CD4-positive, alpha-beta memory T cell (primary cell): ENCODE measurements at regions of chr17 and their contacts with region 1.

Region 1: DNA sequence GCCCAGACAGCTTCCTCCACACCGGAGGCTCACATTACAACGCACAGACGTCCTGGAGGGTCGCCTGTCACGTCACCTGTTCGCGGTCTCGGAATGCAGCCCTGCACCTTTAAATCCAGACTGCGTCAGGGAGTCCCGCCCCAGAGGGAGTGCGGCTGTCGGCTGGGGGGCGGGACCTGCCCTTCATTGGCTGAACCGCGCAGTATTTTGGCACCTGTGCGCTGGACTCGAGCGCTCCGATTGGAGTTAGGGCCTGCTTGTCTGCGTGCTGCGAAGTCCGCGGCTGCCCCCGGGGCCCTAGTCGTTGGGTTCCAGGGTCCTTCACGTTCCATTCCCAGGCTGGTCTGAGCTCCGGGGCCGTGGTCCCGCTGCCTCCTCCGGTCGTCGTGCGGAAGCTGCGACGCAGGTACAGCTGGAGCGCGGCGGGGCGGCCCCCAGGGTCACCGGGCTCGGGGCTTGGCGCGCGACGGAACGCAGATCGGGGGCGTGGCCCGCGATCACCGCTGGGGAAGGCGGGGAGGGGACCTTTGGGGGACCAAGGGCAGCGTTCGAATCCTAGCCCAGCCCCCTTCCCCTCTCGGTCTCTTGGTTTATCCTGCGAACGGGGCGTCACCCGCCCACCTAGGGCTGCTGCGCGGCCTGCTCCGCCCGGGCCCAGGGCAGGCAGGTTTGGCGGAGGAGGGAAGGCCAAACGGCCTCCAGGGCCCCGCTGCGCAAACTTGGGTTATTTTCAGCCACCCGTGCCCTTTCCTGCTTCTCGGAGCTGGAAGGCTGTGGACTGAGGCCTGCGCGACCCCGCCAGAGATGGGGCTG is at the start of gene MIEF2:
- DNase-seq: peak; percentile 90 to 94 (median 92)
- H3K4me3 ChIP-seq: peak within 1 kb of the TSS; percentile 66 to 91
- H3K4me3 Mint-ChIP-seq: peak within 1 kb of the TSS; percentile 80 to 90 (median 82)
- H3K27ac ChIP-seq: peak within 1 kb of the TSS; percentile 96
- H3K27ac Mint-ChIP-seq: peak within 1 kb of the TSS; percentile 86 to 94 (median 89)
- H3K4me1 ChIP-seq: peaks cover 53% of the 10 kb centered on the region
- H3K4me1 Mint-ChIP-seq: peaks cover 17 to 56% (median 37%) of the 10 kb centered on the region in 4 donors
- H3K27me3 ChIP-seq: no peaks in the 10 kb centered on the region
- H3K27me3 Mint-ChIP-seq: no peaks in the 10 kb centered on the region
- total RNA-seq, gene MIEF2: 18.2 to 19.3 TPM

Region 2: DNA sequence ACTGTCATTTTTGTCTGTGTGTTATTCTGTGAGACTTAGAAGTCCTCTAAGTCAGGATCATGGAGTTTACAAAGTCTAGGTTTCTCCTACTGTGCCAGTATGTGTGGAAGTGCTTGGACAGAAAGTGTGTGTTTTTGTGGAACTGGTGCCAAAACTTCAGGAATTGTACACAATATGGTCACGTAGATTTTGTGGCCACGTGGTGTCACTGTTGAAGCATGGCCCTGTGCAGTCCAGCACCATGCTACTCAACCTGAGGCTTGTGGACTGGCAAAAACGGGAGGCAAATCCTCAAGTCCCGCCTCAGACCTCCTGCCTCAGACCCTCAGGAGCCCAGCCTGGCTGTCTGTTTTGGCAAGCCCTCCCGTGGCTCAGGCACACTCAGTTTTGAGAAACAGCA is 93.6 kb before region 1 on chr17:
- CTCF ChIA-PET with region 1: no interaction called
- POLR2A ChIA-PET with region 1: no interaction called
- intact Hi-C with region 1: no loop called
- DNase-seq: no peak
- H3K4me3 ChIP-seq: no peak overlapping the region
- H3K4me3 Mint-ChIP-seq: no peak overlapping the region
- H3K27ac ChIP-seq: no peak overlapping the region
- H3K27ac Mint-ChIP-seq: peak overlapping the region in 3 of 7 donors; percentile 11 to 75 (median 11)
- H3K4me1 ChIP-seq: no peaks in the 10 kb centered on the region
- H3K4me1 Mint-ChIP-seq: no peaks in the 10 kb centered on the region
- H3K27me3 ChIP-seq: no peaks in the 10 kb centered on the region
- H3K27me3 Mint-ChIP-seq: no peaks in the 10 kb centered on the region

Region 3: GRCh38 chr17:18225121-18225566 is 35.4 kb before region 1 on chr17:
- CTCF ChIA-PET with region 1: no interaction called
- POLR2A ChIA-PET with region 1: interaction called, 5 read pairs
- intact Hi-C with region 1: loop called (anchors 1 kb)
- DNase-seq: peak; percentile 94 to 96 (median 96)
- H3K4me3 ChIP-seq: no peak overlapping the region
- H3K4me3 Mint-ChIP-seq: peak overlapping the region in 7 of 8 donors; percentile 41 to 71 (median 65)
- H3K27ac ChIP-seq: peak overlapping the region; percentile 15
- H3K27ac Mint-ChIP-seq: peak overlapping the region in 3 of 7 donors; percentile 59 to 92 (median 82)
- H3K4me1 ChIP-seq: peaks cover 28% of the 10 kb centered on the region
- H3K4me1 Mint-ChIP-seq: peaks cover 15 to 39% (median 21%) of the 10 kb centered on the region in 4 donors
- H3K27me3 ChIP-seq: no peaks in the 10 kb centered on the region
- H3K27me3 Mint-ChIP-seq: no peaks in the 10 kb centered on the region

Region 4: GRCh38 chr17:18248300-18248731 is 12.2 kb before region 1 on chr17:
- CTCF ChIA-PET with region 1: interaction called, 6 read pairs
- POLR2A ChIA-PET with region 1: interaction called, 4 read pairs
- intact Hi-C with region 1: loop called (anchors 1 kb)
- DNase-seq: peak; percentile 60 to 68 (median 66)
- H3K4me3 ChIP-seq: no peak overlapping the region
- H3K4me3 Mint-ChIP-seq: peak overlapping the region in 1 of 8 donors; percentile 17
- H3K27ac ChIP-seq: no peak overlapping the region
- H3K27ac Mint-ChIP-seq: peak overlapping the region in 6 of 7 donors; percentile 57 to 93 (median 80)
- H3K4me1 ChIP-seq: no peaks in the 10 kb centered on the region
- H3K4me1 Mint-ChIP-seq: peaks cover 2 to 7% (median 5%) of the 10 kb centered on the region in 4 donors
- H3K27me3 ChIP-seq: no peaks in the 10 kb centered on the region
- H3K27me3 Mint-ChIP-seq: no peaks in the 10 kb centered on the region